Activated CD4-positive, alpha-beta T cell treated with anti-CD3 and anti-CD28 coated beads, Interleukin-2, amount 10 ng/mL, durations not matched to agents 7 days and 5 days (primary cell): ENCODE measurements at regions of chr22 and their contacts with region 1.

Region 1: DNA sequence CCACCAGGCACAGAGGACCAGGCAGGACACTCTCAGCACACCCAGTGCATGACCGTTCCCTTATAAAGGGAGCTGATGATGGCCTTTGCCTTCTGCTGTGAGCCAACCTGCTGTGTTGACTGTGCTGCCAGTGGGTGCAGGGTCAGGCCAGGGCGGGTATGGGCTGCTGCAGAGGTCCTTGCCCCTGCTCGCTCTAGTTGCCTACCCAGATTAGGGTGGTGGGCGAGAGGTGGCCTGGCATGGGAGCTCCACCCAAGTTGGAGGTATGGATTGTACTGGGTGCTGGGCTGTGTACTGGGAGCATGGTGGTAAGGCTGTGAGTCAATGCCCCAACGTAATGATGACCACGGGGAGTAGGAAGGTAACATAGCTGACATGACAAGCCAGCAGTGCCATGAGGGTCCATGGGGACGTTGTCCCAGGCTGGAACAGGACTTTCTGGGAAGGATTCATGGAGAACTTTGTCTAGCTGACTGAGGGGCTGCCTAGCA is 24.5 kb upstream of the CYP2D6 start:
- DNase-seq: no peak
- H3K4me3 Mint-ChIP-seq: no peak overlapping the region
- H3K27ac Mint-ChIP-seq: peak overlapping the region; percentile 58
- H3K4me1 Mint-ChIP-seq: no peaks in the 10 kb centered on the region
- H3K27me3 Mint-ChIP-seq: no peaks in the 10 kb centered on the region

Region 2: DNA sequence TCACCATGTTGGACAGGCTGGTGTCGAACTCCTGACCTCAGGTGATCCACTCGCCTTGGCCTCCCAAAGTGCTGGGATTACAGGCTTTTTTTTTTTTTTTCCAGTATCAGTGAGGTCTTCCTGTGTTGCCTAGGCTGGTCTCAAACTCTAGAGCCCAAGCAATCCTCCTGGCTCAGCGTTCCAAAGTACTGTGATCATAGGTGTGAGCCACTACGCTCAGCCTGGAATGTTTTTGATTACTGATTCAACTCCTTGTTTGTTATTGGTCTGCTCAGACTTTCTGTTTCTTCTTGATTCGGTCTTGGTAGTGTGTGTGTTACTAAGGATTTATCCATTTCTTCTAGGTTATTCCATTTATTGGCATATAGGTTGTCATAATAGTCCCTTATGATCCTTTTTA is 115.8 kb before region 1 on chr22:
- CTCF ChIA-PET with region 1: no interaction called
- POLR2A ChIA-PET with region 1: no interaction called
- DNase-seq: no peak
- H3K4me3 Mint-ChIP-seq: no peak overlapping the region
- H3K27ac Mint-ChIP-seq: no peak overlapping the region
- H3K4me1 Mint-ChIP-seq: peaks cover 3% of the 10 kb centered on the region
- H3K27me3 Mint-ChIP-seq: peaks cover 12% of the 10 kb centered on the region

Region 3: GRCh38 chr22:42180349-42180842 is 25.3 kb after region 1 on chr22:
- CTCF ChIA-PET with region 1: no interaction called
- POLR2A ChIA-PET with region 1: no interaction called
- DNase-seq: peak; percentile 70
- H3K4me3 Mint-ChIP-seq: peak overlapping the region; percentile 28
- H3K27ac Mint-ChIP-seq: peak overlapping the region; percentile 89
- H3K4me1 Mint-ChIP-seq: peaks cover 78% of the 10 kb centered on the region
- H3K27me3 Mint-ChIP-seq: no peaks in the 10 kb centered on the region

Region 4: DNA sequence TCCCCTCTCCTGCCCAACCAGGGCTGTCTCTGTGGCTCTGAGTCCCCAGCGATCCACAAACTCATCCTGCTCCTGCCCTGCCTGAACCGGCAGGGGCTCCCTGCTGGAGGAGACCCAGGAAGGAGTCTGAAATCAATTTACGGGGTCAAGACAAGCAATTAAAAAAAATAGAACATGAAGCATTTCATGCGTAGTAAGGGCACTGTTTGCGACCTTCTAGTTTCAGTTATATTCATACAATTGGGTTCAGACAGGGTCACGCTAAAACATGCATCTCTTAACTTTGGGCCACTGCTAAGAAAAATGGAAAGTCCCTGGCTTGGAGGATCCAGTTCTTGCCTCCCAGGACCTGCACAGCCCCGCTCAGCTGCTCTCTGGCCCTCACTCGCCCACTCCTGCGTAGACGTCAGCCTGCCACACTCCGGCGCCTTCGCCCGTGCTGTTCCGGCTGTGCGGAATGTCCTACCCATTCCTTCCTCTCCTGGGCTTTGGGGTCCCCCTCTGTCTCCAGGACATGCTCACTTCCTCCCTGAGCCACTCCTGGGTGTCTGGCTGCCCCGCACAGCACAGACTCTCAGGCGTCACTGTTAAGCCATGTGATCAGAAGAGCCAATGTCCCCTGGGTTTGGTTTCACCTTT is 264.3 kb after region 1 on chr22:
- CTCF ChIA-PET with region 1: no interaction called
- POLR2A ChIA-PET with region 1: interaction called, 11 read pairs
- DNase-seq: no peak
- H3K4me3 Mint-ChIP-seq: no peak overlapping the region
- H3K27ac Mint-ChIP-seq: no peak overlapping the region
- H3K4me1 Mint-ChIP-seq: no peaks in the 10 kb centered on the region
- H3K27me3 Mint-ChIP-seq: peaks cover 1% of the 10 kb centered on the region